Left ventricle myocardium inferior (tissue), 1 donor: ENCODE measurements at regions of chr9 and their contacts with region 1.

Region 1: DNA sequence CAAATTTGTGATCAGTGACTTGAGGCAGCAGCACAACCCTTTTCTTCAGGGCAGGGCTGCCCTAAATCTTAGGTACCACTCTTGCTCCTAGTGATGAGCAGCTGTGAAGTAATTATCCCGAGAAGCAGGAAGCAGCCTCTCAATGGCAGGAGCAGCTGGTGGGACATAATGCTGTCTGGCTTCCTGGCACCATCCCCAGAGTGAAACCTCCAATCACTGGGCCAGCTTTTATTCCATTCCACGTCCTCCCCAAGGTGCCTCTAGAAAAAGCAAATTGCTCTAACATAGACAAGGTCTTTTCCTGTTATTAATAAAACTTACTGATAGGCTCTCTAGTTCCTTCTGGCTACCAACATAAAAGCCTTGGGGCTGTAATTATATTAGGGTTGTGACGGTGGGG is 154.0 kb downstream of the FRMD3 start:
- DNase-seq: no peak
- H3K4me3 ChIP-seq: no peak overlapping the region
- H3K27ac ChIP-seq: no peak overlapping the region
- H3K4me1 ChIP-seq: peaks cover 16% of the 10 kb centered on the region
- H3K27me3 ChIP-seq: no peaks in the 10 kb centered on the region
- CTCF ChIP-seq: no peak

Region 2: GRCh38 chr9:83355024-83355444 is 29.2 kb before region 1 on chr9:
- intact Hi-C with region 1: loop called (anchors 2 kb)
- DNase-seq: peak; percentile 36
- H3K4me3 ChIP-seq: no peak overlapping the region
- H3K27ac ChIP-seq: peak overlapping the region; percentile 85
- H3K4me1 ChIP-seq: peaks cover 7% of the 10 kb centered on the region
- H3K27me3 ChIP-seq: no peaks in the 10 kb centered on the region
- CTCF ChIP-seq: no peak